GM10248 (cell line): ENCODE measurements at regions of chr16 and their contacts with region 1.

Region 1: DNA sequence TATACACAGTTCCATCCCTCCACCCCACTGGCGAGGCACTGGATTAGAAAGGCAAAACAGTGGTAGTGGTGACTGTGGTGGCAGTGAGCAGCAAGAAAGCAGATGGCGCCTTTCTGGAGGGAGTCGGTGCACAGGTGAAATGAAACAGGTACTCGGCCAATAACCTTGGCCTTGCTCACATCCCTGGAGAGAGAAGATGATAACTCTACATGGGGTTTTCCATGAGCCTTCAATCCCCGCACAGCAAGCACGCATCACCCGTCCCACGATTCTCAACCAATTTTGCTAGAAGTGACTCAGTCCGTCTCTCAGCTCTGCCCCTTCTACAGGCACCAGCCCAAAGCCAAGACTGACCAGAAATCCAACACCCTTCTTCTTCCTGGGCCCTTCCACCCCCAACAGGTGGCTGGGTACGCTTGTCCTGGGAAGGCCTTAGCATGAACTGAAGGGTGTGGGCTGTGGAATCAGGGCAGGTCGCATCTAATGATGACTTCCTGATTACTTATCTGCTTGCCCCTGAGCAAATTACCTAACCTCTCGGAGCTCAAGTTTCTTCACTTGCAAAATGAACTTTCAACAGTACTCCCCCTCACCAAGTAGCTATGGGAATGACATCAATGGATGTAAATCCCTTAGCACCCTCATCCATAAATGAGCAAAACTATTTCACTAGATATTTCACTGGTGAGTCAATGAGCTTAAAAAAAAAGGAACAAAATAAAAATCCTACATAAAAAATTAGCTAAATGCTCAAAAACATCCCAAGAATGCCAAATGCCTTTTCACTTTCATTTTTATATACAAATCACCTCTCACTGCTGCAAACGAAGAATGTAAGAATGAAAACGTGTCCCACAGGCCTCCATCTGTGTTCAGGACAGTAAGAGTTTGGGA is 18.0 kb downstream of the XPO6 start:
- DNase-seq: no peak
- CTCF ChIP-seq: no peak

Region 2: DNA sequence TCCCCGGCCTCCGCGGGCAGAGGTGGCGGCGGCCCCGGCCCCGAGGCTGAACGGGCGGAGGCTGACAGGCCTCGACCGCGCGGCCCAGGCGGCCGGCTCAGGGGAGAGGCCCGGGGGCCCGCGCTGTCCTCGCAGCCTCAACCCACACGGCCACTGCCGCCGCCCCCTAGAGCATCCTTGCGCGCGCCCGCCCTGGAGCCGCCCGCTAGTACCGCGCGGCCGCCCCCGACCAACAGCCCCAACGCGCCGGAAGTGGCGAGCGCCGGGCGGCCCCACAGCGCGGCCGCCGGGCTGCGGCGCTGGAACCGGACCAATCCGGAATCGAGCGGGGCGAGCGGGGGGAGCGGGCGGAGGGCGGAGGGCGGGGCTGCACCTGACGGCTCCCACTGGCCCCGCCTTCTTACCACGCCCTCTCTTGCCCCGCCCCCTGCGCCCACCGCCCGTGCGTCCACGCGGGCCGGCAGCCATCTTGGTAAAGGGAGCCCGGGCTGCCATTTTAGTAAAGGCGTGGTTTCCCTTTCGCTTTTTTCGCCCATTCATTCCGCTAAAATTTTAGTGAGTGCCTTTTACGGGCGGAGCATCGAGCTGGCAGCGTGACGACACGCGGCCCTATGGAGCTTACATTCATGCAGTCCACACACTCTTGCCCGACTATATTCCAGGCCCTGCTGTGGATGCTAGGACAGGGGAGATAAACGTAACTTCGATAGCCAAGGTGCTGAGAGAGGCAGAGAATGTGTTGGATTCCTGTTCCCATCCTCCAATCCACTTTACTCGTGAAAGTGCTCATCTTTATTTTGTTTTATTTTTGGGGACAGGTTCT is 18.1 kb after region 1 on chr16 and contains the start of gene XPO6:
- CTCF ChIA-PET with region 1: interaction called, 23 read pairs
- POLR2A ChIA-PET with region 1: interaction called, 12 read pairs
- DNase-seq: peak; percentile 98
- CTCF ChIP-seq: no peak

Region 3: DNA sequence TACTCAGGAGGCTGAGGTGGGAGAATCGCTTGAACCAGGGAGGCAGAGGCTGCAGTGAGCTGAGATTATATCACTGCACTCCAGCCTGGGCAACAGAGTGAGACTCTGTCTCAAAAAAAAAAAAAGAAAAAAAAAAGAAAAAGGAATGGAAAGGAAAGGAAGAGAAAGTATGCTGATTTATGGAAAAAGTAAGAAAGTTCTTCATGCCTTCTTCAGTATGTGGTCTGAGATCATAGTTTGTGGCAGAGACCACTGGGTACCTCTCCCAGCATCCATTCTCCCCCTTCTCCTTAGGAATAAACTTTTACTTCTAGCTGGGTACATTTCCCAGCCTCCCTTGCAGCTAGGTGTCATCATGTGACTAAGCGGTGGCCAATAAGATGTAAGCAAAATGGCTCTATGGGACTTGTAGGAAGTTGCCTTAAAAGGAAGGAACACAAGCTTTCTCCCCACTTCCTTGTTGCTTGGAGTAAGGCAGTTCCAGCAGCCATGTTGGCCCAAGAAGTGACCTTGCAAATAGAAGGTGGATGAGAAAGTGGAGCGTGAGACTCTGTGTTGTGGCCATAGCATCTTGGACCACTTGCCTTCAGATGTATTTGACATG is 44.1 kb after region 1 on chr16:
- CTCF ChIA-PET with region 1: no interaction called
- POLR2A ChIA-PET with region 1: no interaction called
- DNase-seq: no peak
- CTCF ChIP-seq: no peak